Colonic mucosa (tissue), 4 donors: ENCODE measurements at regions of chr19 and their contacts with region 1.

Region 1: DNA sequence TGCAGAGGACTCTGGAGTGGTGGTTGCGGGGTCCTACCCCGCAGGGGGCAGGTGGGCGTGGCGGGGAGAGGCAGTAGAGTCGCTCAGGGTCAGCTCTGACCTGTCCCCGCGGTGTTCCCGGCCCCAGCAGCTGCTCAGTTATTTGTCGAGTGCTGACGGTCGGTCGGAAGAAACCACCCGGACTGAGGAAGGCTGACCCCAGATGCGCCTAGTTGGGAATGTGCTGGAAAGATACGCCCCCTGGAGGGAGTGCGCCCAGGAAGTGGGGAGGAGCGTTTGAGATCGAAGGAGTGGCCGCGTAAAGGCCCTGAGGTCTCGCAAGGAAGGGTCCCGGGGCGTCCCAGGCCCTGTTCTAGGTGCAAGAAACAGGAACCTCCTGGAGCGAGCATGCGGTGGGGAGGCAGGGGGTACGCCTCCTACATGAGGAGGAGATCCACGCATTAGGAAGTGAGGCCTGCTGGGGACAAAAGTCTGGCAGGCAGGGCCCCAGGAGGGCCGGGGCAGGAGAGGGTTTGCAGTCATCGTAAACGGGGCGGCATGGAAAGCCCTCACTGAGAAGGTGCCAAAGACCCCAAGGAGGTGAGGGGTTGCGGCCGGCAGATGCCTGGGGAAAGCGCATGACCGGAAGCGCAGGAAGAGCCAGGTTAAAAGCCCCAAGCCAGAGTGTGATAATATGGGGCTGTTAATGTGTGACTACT is 9.2 kb downstream of the CCDC8 start:
- DNase-seq: peak; percentile 82
- H3K4me3 ChIP-seq: peak overlapping the region; percentile 47
- H3K27ac ChIP-seq: no peak overlapping the region
- H3K4me1 ChIP-seq: peaks cover 5% of the 10 kb centered on the region
- H3K27me3 ChIP-seq: peaks cover 4% of the 10 kb centered on the region
- CTCF ChIP-seq: no peak

Region 2: GRCh38 chr19:46487802-46488445 is 83.7 kb after region 1 on chr19:
- intact Hi-C with region 1: loop called (anchors 2 kb)
- DNase-seq: peak; percentile 77
- H3K4me3 ChIP-seq: no peak overlapping the region
- H3K27ac ChIP-seq: no peak overlapping the region
- H3K4me1 ChIP-seq: peaks cover 4% of the 10 kb centered on the region
- H3K27me3 ChIP-seq: peaks cover 24% of the 10 kb centered on the region
- CTCF ChIP-seq: peak; percentile 82

Region 3: DNA sequence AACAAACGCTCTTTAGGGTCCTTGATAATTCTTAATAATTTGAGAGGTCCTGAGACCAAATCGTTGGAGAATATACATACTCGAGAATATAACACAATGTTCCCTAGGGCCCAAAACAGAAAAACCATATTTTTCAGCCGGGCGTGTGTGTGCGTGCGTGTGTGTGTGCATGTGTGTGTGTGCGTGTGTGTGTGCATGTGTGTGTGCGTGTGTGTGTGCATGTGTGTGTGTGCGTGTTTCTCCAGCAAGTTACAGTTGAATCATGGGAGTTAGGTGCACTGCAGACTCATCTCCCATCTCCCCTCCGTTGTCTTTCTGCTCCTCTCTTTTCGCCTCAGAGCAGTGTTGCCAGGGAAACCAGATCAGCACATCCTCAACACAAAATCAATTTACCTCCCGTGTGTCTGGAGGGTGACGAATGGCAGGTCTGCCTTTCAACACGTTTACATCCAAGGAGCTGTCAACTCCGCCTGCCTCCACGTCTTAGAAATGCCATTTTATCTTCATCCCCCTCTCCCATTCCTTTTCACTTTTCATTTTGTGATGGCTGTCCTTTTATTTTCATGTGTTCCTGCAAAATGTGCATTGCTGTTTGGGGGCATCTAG is 99.7 kb after region 1 on chr19:
- intact Hi-C with region 1: no loop called
- DNase-seq: no peak
- H3K4me3 ChIP-seq: no peak overlapping the region
- H3K27ac ChIP-seq: no peak overlapping the region
- H3K4me1 ChIP-seq: no peaks in the 10 kb centered on the region
- H3K27me3 ChIP-seq: no peaks in the 10 kb centered on the region
- CTCF ChIP-seq: no peak